ENCODE measurements at regions of chr6 and their contacts with region 1.

Region 1: GRCh38 chr6:89432875-89433251 is at the start of gene ANKRD6:
- DNase-seq: peak; percentile 69 to 90 (median 81)
- ATAC-seq: peak; percentile 82 to 97 (median 96)
- H3K4me3 ChIP-seq: peak within 1 kb of the TSS; percentile 75 to 99 (median 88)
- H3K27ac ChIP-seq: peak within 1 kb of the TSS in 5 of 12 donors; percentile 28 to 72 (median 60)
- H3K4me1 ChIP-seq: peaks cover 0 to 29% (median 8%) of the 10 kb centered on the region in 12 donors
- H3K27me3 ChIP-seq: no peaks in the 10 kb centered on the region
- CTCF ChIP-seq: peak; percentile 49 to 99 (median 90)
- POLR2A ChIP-seq: peak in 1 of 2 donors; percentile 19
- total RNA-seq, gene ANKRD6: 7.4 to 14.1 (median 11.3) TPM

Region 2: GRCh38 chr6:89597988-89598692 is 165.3 kb after region 1 on chr6:
- intact Hi-C with region 1: loop called in 1 of 10 experiments (anchors 5 kb)
- DNase-seq: no peak
- ATAC-seq: peak in 2 of 4 donors; percentile 29 to 38
- H3K4me3 ChIP-seq: no peak overlapping the region
- H3K27ac ChIP-seq: no peak overlapping the region
- H3K4me1 ChIP-seq: peaks cover 0 to 16% (median 5%) of the 10 kb centered on the region in 12 donors
- H3K27me3 ChIP-seq: no peaks in the 10 kb centered on the region
- CTCF ChIP-seq: peak in 7 of 12 donors; percentile 14 to 42 (median 31)
- POLR2A ChIP-seq: no peak

Region 3: GRCh38 chr6:89610149-89610642 is 177.3 kb after region 1 on chr6:
- intact Hi-C with region 1: loop called (anchors 1 to 5 kb)
- DNase-seq: peak; percentile 52 to 87 (median 70)
- ATAC-seq: peak; percentile 61 to 85 (median 78)
- H3K4me3 ChIP-seq: no peak overlapping the region
- H3K27ac ChIP-seq: no peak overlapping the region
- H3K4me1 ChIP-seq: peaks cover 0 to 4% (median 0%) of the 10 kb centered on the region in 12 donors
- H3K27me3 ChIP-seq: no peaks in the 10 kb centered on the region
- CTCF ChIP-seq: peak; percentile 76 to 92 (median 86)
- POLR2A ChIP-seq: no peak

Region 4: GRCh38 chr6:89689732-89690131 is 256.9 kb after region 1 on chr6:
- intact Hi-C with region 1: loop called in 1 of 10 experiments (anchors 10 kb)
- DNase-seq: peak in 1 of 5 donors; percentile 34
- ATAC-seq: peak in 3 of 4 donors; percentile 49 to 78 (median 69)
- H3K4me3 ChIP-seq: peak overlapping the region in 2 of 12 donors; percentile 27 to 36
- H3K27ac ChIP-seq: peak overlapping the region in 8 of 12 donors; percentile 1 to 75 (median 44)
- H3K4me1 ChIP-seq: peaks cover 0 to 20% (median 8%) of the 10 kb centered on the region in 12 donors
- H3K27me3 ChIP-seq: no peaks in the 10 kb centered on the region
- CTCF ChIP-seq: no peak
- POLR2A ChIP-seq: no peak

Measured in heart left ventricle (tissue), 16 donors.